Activated CD4-positive, alpha-beta memory T cell treated with anti-CD3 and anti-CD28 coated beads, Interleukin-2, amount 10 ng/mL, durations not matched to agents 7 days and 5 days (primary cell): ENCODE measurements at regions of chr9 and their contacts with region 1.

Region 1: GRCh38 chr9:91036826-91037510 is 235.3 kb downstream of the SYK start:
- DNase-seq: peak; percentile 85
- H3K4me3 Mint-ChIP-seq: peak overlapping the region; percentile 31
- H3K27ac Mint-ChIP-seq: peak overlapping the region; percentile 74
- H3K4me1 Mint-ChIP-seq: peaks cover 65% of the 10 kb centered on the region
- H3K27me3 Mint-ChIP-seq: no peaks in the 10 kb centered on the region

Region 2: GRCh38 chr9:89759572-89759971 is 1277.4 kb before region 1 on chr9:
- CTCF ChIA-PET with region 1: no interaction called
- POLR2A ChIA-PET with region 1: no interaction called
- DNase-seq: no peak
- H3K4me3 Mint-ChIP-seq: no peak overlapping the region
- H3K27ac Mint-ChIP-seq: no peak overlapping the region
- H3K4me1 Mint-ChIP-seq: peaks cover 7% of the 10 kb centered on the region
- H3K27me3 Mint-ChIP-seq: peaks cover 13% of the 10 kb centered on the region

Region 3: DNA sequence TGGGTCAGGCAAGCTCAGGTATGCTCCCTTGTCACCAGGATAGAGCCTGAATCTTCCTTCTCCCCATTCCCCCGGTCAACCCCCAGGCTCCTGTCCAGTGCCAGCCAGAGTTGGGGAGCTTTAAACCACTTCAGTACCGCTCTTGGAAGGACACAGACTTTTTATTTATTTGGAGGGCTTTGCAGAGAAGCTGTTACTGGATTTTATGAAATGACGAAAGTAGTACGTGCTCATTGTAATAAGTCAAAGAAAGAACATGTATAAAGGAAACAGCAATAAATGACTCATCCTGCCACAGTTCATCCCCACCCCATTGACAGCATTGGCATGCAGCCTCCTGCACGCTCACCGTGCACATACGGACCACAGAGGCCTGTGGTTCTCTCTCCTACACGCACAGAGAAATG is 94.5 kb after region 1 on chr9:
- CTCF ChIA-PET with region 1: interaction called, 5 read pairs
- POLR2A ChIA-PET with region 1: interaction called, 13 read pairs
- DNase-seq: peak; percentile 90
- H3K4me3 Mint-ChIP-seq: peak overlapping the region; percentile 62
- H3K27ac Mint-ChIP-seq: peak overlapping the region; percentile 99
- H3K4me1 Mint-ChIP-seq: peaks cover 61% of the 10 kb centered on the region
- H3K27me3 Mint-ChIP-seq: no peaks in the 10 kb centered on the region

Region 4: DNA sequence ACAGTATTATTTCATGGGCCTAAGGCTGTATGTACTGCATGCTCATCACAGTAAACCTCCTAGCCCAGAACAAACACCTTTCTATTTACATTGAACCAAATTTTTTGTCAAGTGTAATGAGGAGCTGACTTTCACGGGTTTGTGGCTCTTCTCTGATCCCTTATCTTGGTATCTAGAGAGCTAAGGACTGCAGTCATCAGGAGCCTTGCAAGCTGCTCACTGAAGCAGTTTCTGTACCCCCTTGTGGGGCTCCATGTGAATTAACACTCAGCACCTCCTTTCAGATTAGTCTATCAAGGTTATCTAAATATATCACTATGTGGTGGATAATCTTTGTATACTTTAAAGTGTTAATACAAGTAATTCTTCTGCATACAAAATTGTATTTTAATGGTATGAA is 216.5 kb after region 1 on chr9:
- CTCF ChIA-PET with region 1: interaction called, 19 read pairs
- POLR2A ChIA-PET with region 1: interaction called, 10 read pairs
- DNase-seq: peak; percentile 66
- H3K4me3 Mint-ChIP-seq: no peak overlapping the region
- H3K27ac Mint-ChIP-seq: no peak overlapping the region
- H3K4me1 Mint-ChIP-seq: peaks cover 56% of the 10 kb centered on the region
- H3K27me3 Mint-ChIP-seq: no peaks in the 10 kb centered on the region

Region 5: GRCh38 chr9:91433180-91433579 is 396.2 kb after region 1 on chr9:
- CTCF ChIA-PET with region 1: interaction called, 61 read pairs
- POLR2A ChIA-PET with region 1: interaction called, 3 read pairs
- DNase-seq: no peak
- H3K4me3 Mint-ChIP-seq: no peak overlapping the region
- H3K27ac Mint-ChIP-seq: no peak overlapping the region
- H3K4me1 Mint-ChIP-seq: peaks cover 30% of the 10 kb centered on the region
- H3K27me3 Mint-ChIP-seq: peaks cover 16% of the 10 kb centered on the region